Activated naive CD4-positive, alpha-beta T cell treated with anti-CD3 and anti-CD28 coated beads for 36 hours (primary cell): ENCODE measurements at regions of chr6 and their contacts with region 1.

Region 1: GRCh38 chr6:28104392-28105244 is 19.8 kb upstream of the ZSCAN16 start:
- DNase-seq: peak; percentile 89
- H3K4me3 Mint-ChIP-seq: peak overlapping the region; percentile 89
- H3K27ac Mint-ChIP-seq: peak overlapping the region; percentile 89
- H3K4me1 Mint-ChIP-seq: peaks cover 9% of the 10 kb centered on the region
- H3K27me3 Mint-ChIP-seq: peaks cover 10% of the 10 kb centered on the region

Region 2: DNA sequence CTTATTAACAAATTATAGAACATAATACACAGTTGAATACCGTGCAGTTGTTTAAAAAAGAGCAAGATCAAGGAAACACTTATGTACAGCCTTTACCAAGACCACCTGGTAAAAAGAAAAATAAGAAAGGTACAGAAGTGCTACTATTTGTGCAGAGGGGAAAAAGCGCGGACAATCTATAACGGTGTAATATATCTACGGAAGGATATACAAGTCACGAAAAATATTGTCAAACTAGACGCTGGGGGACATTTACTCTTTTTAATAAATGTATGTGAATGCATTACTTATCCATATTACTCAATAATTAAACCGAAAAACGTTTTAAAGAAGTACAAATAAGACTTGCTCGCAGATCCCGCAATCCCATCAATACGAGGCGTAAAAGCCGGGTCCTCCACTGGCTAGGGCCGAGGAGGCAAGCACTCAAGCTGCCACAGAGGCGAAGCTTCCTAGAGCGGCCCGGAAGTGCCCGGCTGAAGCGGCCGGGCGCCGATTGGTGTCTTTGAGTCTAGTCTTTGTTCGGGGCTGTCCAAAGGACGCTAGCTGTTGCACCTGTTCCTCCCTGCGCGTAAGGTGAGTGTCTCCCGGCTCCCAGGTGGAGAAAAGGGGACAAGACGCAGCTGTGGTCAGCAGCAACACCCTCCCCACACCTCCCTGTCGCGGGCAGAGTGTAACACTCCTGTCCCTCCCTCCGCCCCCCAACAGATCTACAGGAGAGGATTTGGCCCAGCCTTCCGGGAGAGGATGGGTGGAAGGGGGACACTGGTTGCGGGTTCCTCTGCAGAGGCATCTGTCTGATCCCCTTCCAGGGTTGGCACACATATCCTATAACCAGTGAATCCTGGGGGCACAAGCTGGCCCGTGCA is 19.7 kb after region 1 on chr6 and contains the start of gene ZSCAN16:
- CTCF ChIA-PET with region 1: interaction called, 3 read pairs
- intact Hi-C with region 1: loop called (anchors 2 kb)
- DNase-seq: peak; percentile 78
- H3K4me3 Mint-ChIP-seq: peak within 1 kb of the TSS; percentile 94
- H3K27ac Mint-ChIP-seq: peak within 1 kb of the TSS; percentile 89
- H3K4me1 Mint-ChIP-seq: peaks cover 45% of the 10 kb centered on the region
- H3K27me3 Mint-ChIP-seq: no peaks in the 10 kb centered on the region
- total RNA-seq, gene ZSCAN16: 2.3 TPM